ENCODE measurements at regions of chr3 and their contacts with region 1.

Region 1: DNA sequence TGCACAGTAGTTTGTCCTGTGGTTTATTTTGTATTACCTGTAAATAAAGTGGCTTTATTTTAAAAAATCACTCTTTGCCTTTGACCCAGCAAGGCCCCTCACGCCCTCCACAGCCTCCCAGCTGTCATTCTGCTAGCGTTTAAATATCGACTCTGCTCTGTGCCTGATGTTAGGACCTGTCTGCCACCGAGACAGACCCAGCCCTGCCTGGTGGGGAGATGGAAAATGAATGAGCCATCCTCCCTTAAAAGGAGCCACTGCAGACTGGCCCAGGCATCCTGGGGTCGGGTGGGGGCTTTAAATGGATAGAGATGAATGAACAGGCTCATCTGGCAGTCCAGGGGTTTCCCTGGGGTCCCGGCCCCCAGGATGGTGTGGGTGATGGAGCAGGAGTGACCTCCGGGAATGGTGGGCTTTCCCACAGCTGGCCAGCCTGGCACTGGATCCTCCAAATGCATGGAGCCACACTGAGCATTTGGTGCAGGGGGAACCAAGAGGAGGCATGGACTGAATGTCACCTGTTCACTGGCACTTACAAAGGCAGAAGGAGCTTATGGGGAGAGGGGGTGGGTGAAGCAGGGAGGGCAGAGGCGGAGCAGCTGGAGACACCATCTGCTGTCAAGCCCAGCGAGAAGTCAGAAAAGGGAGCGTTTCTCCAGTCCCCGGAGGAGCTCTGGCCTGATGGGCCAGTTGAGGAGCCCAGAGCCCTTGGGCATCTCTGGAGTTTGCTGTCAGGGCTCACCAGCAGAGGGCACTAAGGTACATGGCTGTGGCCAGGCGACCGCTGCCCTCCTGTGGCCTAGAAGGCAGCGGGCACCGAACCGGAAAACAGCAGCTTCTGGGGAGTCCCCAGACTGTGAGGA is 11.9 kb downstream of the GRM2 start:
- DNase-seq: peak; percentile 69 to 92
- H3K4me3 ChIP-seq: no peak overlapping the region
- H3K27ac ChIP-seq: no peak overlapping the region
- H3K4me1 ChIP-seq: no peaks in the 10 kb centered on the region; a peak in 1 of 7 replicates
- H3K27me3 ChIP-seq: no peaks in the 10 kb centered on the region
- CTCF ChIP-seq: peak in 2 of 3 experiments; percentile 99 to 100; a peak in 3 of 4 replicates
- EP300 ChIP-seq: no peak
- POLR2A ChIP-seq: no peak
- RAD21 ChIP-seq: peak; percentile 89 to 95

Region 2: GRCh38 chr3:51706788-51707731 is 11.7 kb before region 1 on chr3 and contains the start of gene GRM2:
- CTCF ChIA-PET with region 1: interaction called, 43 read pairs
- POLR2A ChIA-PET with region 1: interaction called, 4 read pairs
- DNase-seq: peak; percentile 53 to 90
- H3K4me3 ChIP-seq: peak within 1 kb of the TSS; percentile 49 to 79 (median 74)
- H3K27ac ChIP-seq: no peak within 1 kb of the TSS
- H3K4me1 ChIP-seq: peaks cover 0 to 34% (median 22%) of the 10 kb centered on the region in 4 experiments; a peak in 6 of 7 replicates
- H3K27me3 ChIP-seq: peaks cover 13 to 24% (median 23%) of the 10 kb centered on the region in 4 experiments; a peak in 6 of 7 replicates
- CTCF ChIP-seq: no peak; a peak in 1 of 4 replicates
- EP300 ChIP-seq: peak in 1 of 2 experiments; percentile 37; a peak in 1 of 3 replicates
- POLR2A ChIP-seq: peak in 1 of 2 experiments; percentile 46; a peak in 1 of 3 replicates
- RAD21 ChIP-seq: peak; percentile 4 to 16; a peak in 1 of 4 replicates
- total RNA-seq, gene GRM2: 3.9 and 4.3 TPM in 2 replicates

Region 3: GRCh38 chr3:51734572-51734907 is 15.8 kb after region 1 on chr3:
- CTCF ChIA-PET with region 1: interaction called, 15 read pairs
- POLR2A ChIA-PET with region 1: interaction called, 3 read pairs
- DNase-seq: no peak
- H3K4me3 ChIP-seq: no peak overlapping the region
- H3K27ac ChIP-seq: no peak overlapping the region
- H3K4me1 ChIP-seq: peaks cover 0 to 5% (median 0%) of the 10 kb centered on the region in 4 experiments; a peak in 2 of 7 replicates
- H3K27me3 ChIP-seq: no peaks in the 10 kb centered on the region
- CTCF ChIP-seq: no peak
- EP300 ChIP-seq: no peak
- POLR2A ChIP-seq: no peak
- RAD21 ChIP-seq: no peak

Region 4: GRCh38 chr3:51799879-51800749 is 81.3 kb after region 1 on chr3:
- CTCF ChIA-PET with region 1: interaction called, 108 read pairs
- POLR2A ChIA-PET with region 1: interaction called, 7 read pairs
- DNase-seq: peak in 1 of 2 experiments; percentile 52
- H3K4me3 ChIP-seq: no peak overlapping the region
- H3K27ac ChIP-seq: no peak overlapping the region
- H3K4me1 ChIP-seq: peaks cover 6 to 24% (median 20%) of the 10 kb centered on the region in 4 experiments; a peak in 6 of 7 replicates
- H3K27me3 ChIP-seq: no peaks in the 10 kb centered on the region
- CTCF ChIP-seq: peak in 2 of 3 experiments; percentile 73; a peak in 3 of 4 replicates
- EP300 ChIP-seq: no peak
- POLR2A ChIP-seq: no peak
- RAD21 ChIP-seq: peak; percentile 81 to 83

Region 5: GRCh38 chr3:51819709-51820406 is 101.1 kb after region 1 on chr3:
- CTCF ChIA-PET with region 1: interaction called, 41 read pairs
- POLR2A ChIA-PET with region 1: no interaction called
- DNase-seq: peak; percentile 43 to 87
- H3K4me3 ChIP-seq: no peak overlapping the region
- H3K27ac ChIP-seq: no peak overlapping the region
- H3K4me1 ChIP-seq: no peaks in the 10 kb centered on the region
- H3K27me3 ChIP-seq: no peaks in the 10 kb centered on the region
- CTCF ChIP-seq: peak; percentile 74 to 96 (median 86)
- EP300 ChIP-seq: no peak
- POLR2A ChIP-seq: no peak
- RAD21 ChIP-seq: peak; percentile 60 to 71

Measured in H1 (cell line).